ENCODE measurements at regions of chr3 and their contacts with region 1.

Region 1: DNA sequence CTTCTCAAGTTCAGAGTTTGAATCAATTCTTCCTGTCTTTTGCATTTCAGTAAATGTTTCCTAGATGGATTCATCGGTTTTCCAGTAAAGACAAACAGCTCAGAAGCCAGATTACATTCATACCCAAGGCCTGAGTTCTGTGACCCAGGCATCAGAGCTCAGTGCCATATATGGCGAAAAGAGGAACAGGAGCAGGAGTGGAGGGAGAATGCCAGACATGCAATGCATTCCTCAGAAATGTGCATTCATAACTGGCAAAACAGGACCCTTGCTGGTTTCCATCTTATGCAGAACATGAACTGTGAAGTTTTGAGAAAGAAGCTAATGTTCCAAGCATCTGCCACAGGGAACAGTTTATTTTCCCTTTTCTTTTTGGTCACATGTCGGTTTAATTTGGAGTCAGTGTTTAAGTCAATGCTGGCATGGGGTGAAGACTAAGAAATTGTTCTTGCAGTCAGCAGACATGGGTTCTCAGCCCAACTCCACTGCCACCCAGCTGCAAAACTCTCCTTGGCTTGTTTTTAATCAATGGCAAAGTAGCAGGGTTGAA is 116.5 kb downstream of the LPP start:
- DNase-seq: no peak
- ATAC-seq: no peak
- H3K4me3 Mint-ChIP-seq: peak overlapping the region; percentile 21
- H3K27ac Mint-ChIP-seq: peak overlapping the region; percentile 56
- H3K4me1 Mint-ChIP-seq: peaks cover 34% of the 10 kb centered on the region
- H3K27me3 Mint-ChIP-seq: no peaks in the 10 kb centered on the region
- CTCF ChIP-seq: no peak

Region 2: DNA sequence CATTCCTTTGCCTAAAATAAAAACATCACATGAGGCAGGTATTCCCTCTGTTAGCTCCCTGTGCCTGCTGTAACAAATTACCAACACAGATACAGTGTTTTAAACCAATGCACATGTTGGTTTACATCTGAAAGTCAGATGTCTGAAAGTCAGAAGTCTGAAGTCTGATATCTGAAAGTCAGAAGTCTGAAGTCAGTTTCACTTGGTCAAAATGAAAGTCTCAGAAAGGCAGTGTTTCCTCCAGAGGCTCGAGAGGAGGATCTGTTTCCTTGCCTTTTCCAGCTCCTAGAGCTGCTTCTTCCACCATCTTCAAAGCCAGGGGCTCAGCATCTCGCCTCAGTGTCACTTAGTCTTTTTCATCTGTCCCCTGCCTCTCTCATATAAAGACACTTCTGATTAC is 622.3 kb before region 1 on chr3:
- CTCF ChIA-PET with region 1: no interaction called
- POLR2A ChIA-PET with region 1: no interaction called
- intact Hi-C with region 1: no loop called
- DNase-seq: no peak
- ATAC-seq: no peak
- H3K4me3 Mint-ChIP-seq: no peak overlapping the region
- H3K27ac Mint-ChIP-seq: no peak overlapping the region
- H3K4me1 Mint-ChIP-seq: no peaks in the 10 kb centered on the region
- H3K27me3 Mint-ChIP-seq: peaks cover 22% of the 10 kb centered on the region
- CTCF ChIP-seq: no peak

Region 3: GRCh38 chr3:188257384-188258026 is 13.0 kb before region 1 on chr3:
- CTCF ChIA-PET with region 1: no interaction called
- POLR2A ChIA-PET with region 1: no interaction called
- intact Hi-C with region 1: loop called (anchors 1 kb)
- DNase-seq: no peak
- ATAC-seq: no peak
- H3K4me3 Mint-ChIP-seq: no peak overlapping the region
- H3K27ac Mint-ChIP-seq: no peak overlapping the region
- H3K4me1 Mint-ChIP-seq: peaks cover 16% of the 10 kb centered on the region
- H3K27me3 Mint-ChIP-seq: no peaks in the 10 kb centered on the region
- CTCF ChIP-seq: no peak

Region 4: DNA sequence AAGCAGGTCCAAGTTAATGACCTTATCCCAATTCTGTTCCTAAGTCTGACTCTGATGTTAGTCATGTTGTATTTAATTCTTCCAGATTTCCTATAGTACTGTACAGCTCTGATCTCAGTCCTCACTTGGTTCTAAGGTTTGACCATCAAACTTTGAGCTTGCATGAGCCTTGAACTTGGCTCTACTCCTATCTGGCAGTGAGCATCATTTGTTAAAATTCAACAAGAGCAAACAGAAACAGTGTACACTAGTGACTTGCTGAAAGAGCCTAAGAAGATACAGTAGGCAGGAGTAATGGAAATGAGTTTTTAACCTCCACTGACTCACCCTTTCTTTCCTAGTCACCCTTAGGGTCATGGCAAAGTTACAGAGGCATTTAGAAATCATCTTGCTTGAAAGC is 450.1 kb after region 1 on chr3:
- CTCF ChIA-PET with region 1: no interaction called
- POLR2A ChIA-PET with region 1: interaction called, 10 read pairs
- intact Hi-C with region 1: no loop called
- DNase-seq: no peak
- ATAC-seq: no peak
- H3K4me3 Mint-ChIP-seq: no peak overlapping the region
- H3K27ac Mint-ChIP-seq: no peak overlapping the region
- H3K4me1 Mint-ChIP-seq: peaks cover 5% of the 10 kb centered on the region
- H3K27me3 Mint-ChIP-seq: no peaks in the 10 kb centered on the region
- CTCF ChIP-seq: no peak